ENCODE measurements at regions of chr1 and their contacts with region 1.

Region 1: DNA sequence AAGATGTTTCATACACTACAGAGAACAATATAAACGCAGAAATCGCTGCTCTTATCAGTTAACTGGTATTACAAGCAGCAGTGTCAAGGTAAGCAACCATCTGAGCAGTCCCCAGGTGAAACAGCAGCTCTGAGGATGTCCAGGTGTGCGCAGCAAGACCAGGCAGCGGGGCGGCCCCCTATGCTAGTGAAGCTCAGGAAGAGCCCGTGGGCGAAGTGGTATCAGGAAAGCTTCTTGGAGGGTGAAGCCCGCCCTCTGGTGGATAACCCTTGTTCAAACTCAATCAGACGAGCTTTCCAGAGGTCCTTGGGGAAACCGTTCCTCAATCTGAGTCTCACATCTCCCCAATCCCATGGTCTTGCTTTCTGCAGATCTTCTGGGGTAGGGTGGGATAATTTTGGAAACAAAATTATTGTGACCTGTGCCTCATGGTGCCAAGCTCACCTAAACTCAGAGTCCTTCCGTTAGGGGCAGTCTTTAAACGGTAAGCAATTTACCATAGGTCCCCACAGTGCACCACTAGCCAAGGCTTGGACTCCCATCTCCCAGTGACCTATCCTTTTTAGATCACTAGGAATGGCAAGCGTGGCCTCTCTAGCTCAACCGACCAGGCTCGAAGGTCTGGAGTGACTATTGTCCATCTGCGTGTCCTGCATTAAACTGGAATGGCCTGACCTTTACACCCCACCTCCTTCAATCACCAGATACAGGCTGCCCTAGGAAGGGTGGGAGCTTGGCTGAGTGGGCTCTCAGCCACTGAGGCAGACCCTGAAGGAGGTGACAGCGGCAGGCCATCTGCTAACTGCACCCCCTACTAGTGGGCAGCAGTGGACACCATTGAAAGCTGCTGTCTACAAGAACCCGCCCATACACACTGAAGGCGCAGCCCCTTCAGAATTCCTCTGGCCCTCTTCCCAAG is 13.6 kb upstream of the FAM110D start:
- DNase-seq: peak; percentile 90
- H3K4me3 Mint-ChIP-seq: no peak overlapping the region
- H3K27ac Mint-ChIP-seq: no peak overlapping the region
- H3K4me1 Mint-ChIP-seq: no peaks in the 10 kb centered on the region
- H3K27me3 Mint-ChIP-seq: peaks cover 12% of the 10 kb centered on the region
- CTCF ChIP-seq: peak; percentile 84

Region 2: DNA sequence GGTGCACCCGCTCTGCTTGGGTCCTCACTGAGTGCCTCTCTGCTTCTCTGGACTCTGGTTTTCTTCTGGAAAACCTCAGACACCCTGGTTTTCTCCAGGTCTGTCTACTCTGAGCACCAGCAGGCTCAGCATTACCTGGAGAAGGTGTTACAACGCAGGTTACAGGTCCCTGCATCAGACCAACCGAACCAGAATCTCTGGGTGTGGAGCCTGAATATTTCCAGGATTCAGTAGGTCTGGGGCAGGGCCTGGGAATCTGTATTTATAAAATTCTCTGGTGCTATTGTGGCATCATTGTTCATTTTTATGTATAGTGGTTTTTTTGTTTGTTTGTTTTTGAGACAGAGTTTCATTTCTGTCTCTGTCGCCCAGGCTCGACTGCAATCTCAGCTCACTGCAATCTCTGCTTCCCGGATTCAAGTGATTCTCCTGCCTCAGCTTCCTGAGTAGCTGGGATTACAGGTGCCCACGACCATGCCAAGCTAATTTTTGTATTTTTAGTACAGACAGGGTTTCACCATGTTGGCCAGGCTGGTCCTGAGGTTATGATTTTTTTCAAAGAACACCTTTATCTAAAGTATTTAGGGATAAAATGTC is 97.9 kb before region 1 on chr1:
- CTCF ChIA-PET with region 1: no interaction called
- POLR2A ChIA-PET with region 1: no interaction called
- intact Hi-C with region 1: no loop called
- DNase-seq: no peak
- H3K4me3 Mint-ChIP-seq: no peak overlapping the region
- H3K27ac Mint-ChIP-seq: no peak overlapping the region
- H3K4me1 Mint-ChIP-seq: no peaks in the 10 kb centered on the region
- H3K27me3 Mint-ChIP-seq: peaks cover 51% of the 10 kb centered on the region
- CTCF ChIP-seq: no peak

Region 3: GRCh38 chr1:26084091-26084561 is 61.2 kb before region 1 on chr1:
- CTCF ChIA-PET with region 1: interaction called, 14 read pairs
- POLR2A ChIA-PET with region 1: no interaction called
- intact Hi-C with region 1: no loop called
- DNase-seq: no peak
- H3K4me3 Mint-ChIP-seq: no peak overlapping the region
- H3K27ac Mint-ChIP-seq: no peak overlapping the region
- H3K4me1 Mint-ChIP-seq: no peaks in the 10 kb centered on the region
- H3K27me3 Mint-ChIP-seq: peaks cover 27% of the 10 kb centered on the region
- CTCF ChIP-seq: no peak

Region 4: DNA sequence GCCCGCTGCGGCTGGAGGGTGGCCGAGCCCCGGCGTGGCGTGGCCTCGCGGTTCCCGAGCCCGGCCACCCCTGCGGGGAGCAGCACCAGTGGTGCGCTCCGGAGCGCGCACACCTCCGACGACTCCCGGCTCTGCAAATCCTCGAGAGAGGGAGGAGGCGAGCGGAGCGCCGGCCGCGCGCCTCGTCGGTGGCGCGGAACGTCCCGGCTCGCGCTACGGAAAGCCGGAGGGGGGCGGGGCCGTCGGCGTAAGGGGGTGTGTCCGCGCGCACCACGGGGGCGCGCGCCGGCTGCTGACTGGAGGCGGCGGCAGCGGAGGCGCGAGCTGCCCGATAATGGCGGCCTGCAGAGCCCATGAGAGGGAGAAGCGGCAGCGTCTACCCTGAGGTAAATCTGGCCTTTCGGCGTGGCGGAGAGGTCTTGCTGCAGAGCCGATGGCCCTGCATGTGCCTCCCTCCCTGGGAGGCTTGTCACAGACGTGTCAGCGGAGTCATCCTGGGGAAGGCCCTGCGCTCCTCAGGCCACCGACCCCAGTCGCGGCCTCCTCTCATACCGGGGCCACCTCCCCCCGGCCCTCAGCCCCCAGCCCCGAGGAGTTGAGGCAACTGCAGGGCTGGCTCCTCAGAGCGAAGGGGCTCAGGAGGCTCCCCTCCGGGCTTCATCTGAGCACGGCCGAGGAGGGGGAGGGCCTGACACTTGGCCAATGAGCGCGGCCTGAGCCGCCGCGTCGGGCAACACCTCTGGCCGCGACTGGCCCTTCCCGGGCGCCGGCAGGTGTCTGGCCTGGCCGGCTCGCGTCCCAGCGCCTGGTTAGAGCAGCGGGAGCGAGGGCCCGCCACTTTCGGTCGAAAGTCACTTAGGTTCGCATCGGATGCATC is 33.5 kb before region 1 on chr1 and contains the start of gene PDIK1L:
- CTCF ChIA-PET with region 1: interaction called, 65 read pairs
- POLR2A ChIA-PET with region 1: interaction called, 29 read pairs
- intact Hi-C with region 1: loop called (anchors 1 kb)
- DNase-seq: peak; percentile 93
- H3K4me3 Mint-ChIP-seq: peak within 1 kb of the TSS; percentile 85
- H3K27ac Mint-ChIP-seq: peak within 1 kb of the TSS; percentile 70
- H3K4me1 Mint-ChIP-seq: no peaks in the 10 kb centered on the region
- H3K27me3 Mint-ChIP-seq: no peaks in the 10 kb centered on the region
- CTCF ChIP-seq: no peak
- total RNA-seq, gene PDIK1L: 10.8 and 10.9 TPM in 2 replicates

Region 5: DNA sequence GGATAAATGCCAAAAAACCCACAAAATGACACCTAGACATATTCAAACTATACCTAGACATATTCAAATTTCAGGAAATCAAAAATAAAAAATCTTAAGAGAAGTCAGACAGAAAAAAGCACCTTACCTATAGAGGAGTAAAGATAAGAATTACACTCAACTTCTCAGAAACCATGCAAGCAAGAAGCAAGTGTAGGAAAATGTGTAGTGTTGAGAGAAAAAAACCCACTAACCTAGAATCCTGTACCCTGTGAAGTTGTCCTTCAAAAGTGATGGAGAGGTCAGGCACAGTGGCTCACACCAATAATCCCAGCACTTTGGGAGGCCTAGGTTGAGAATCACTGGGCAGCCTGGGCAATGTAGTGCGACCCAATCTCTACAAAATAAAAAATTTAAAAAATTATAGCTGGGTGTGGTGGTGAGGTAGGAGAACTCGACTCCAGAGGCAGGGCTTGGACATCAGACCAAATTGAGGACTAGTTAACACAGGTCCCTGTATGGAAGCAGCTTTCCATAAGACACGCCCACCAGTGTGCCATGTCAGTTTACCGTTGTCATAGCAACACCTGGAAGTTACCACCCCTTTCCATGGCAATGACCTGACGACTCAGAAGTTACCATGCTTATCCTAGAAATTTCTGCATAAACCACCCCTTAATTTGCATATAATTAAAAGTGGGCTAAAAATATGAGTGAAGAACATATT is 13.0 kb before region 1 on chr1:
- CTCF ChIA-PET with region 1: interaction called, 27 read pairs
- POLR2A ChIA-PET with region 1: interaction called, 12 read pairs
- intact Hi-C with region 1: no loop called
- DNase-seq: no peak
- H3K4me3 Mint-ChIP-seq: no peak overlapping the region
- H3K27ac Mint-ChIP-seq: no peak overlapping the region
- H3K4me1 Mint-ChIP-seq: peaks cover 14% of the 10 kb centered on the region
- H3K27me3 Mint-ChIP-seq: no peaks in the 10 kb centered on the region
- CTCF ChIP-seq: no peak

Region 6: DNA sequence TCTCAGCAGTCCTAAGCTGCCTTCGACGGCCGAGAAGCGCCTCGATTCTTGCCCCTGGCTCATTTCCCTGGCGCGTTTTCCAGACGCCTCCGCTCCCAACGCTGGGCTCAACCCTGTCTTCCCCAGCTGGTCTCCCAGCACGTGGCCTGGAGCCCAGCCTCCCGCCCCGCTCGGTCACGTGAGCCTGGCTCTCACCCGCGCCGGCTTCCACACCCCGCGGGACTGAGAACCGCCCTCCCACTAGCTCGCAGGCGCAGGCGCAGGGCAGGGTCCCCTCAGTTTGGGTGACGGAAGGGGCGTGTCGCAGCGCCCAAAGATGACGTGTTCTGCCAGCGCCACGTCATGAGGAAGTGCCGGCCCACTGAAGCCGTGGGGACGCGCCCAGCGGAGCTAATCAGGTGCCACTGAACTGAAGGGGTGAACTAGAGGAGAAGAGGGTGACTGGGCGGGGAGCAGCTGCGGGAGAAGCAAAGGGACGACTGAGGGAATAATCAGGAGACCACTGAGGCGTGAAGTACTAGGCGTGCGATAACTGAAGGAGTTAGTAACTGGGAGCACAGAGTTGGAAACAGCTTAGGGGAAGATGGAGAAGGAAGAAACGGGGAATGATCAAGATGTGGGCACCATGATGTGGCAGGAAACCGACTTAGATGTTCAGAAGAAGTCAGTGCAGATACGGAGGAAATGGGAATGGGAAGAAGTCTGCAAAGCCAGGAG is 286.8 kb after region 1 on chr1 and contains the start of gene DHDDS:
- CTCF ChIA-PET with region 1: no interaction called
- POLR2A ChIA-PET with region 1: no interaction called
- intact Hi-C with region 1: no loop called
- DNase-seq: peak; percentile 97
- H3K4me3 Mint-ChIP-seq: peak within 1 kb of the TSS; percentile 94
- H3K27ac Mint-ChIP-seq: peak within 1 kb of the TSS; percentile 88
- H3K4me1 Mint-ChIP-seq: peaks cover 12% of the 10 kb centered on the region
- H3K27me3 Mint-ChIP-seq: no peaks in the 10 kb centered on the region
- CTCF ChIP-seq: no peak
- total RNA-seq, gene DHDDS: 48.2 and 56.2 TPM in 2 replicates